ENCODE measurements at regions of chr1 and their contacts with region 1.

Region 1: GRCh38 chr1:228180271-228180958 is 14.8 kb downstream of the IBA57 start:
- DNase-seq: no peak

Region 2: DNA sequence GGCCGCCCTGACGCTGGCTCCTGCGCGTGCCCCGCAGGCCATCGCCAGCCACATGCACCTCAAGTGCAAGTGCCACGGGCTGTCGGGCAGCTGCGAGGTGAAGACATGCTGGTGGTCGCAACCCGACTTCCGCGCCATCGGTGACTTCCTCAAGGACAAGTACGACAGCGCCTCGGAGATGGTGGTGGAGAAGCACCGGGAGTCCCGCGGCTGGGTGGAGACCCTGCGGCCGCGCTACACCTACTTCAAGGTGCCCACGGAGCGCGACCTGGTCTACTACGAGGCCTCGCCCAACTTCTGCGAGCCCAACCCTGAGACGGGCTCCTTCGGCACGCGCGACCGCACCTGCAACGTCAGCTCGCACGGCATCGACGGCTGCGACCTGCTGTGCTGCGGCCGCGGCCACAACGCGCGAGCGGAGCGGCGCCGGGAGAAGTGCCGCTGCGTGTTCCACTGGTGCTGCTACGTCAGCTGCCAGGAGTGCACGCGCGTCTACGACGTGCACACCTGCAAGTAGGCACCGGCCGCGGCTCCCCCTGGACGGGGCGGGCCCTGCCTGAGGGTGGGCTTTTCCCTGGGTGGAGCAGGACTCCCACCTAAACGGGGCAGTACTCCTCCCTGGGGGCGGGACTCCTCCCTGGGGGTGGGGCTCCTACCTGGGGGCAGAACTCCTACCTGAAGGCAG is 121.3 kb before region 1 on chr1:
- in situ Hi-C with region 1: no loop called
- DNase-seq: no peak

Region 3: DNA sequence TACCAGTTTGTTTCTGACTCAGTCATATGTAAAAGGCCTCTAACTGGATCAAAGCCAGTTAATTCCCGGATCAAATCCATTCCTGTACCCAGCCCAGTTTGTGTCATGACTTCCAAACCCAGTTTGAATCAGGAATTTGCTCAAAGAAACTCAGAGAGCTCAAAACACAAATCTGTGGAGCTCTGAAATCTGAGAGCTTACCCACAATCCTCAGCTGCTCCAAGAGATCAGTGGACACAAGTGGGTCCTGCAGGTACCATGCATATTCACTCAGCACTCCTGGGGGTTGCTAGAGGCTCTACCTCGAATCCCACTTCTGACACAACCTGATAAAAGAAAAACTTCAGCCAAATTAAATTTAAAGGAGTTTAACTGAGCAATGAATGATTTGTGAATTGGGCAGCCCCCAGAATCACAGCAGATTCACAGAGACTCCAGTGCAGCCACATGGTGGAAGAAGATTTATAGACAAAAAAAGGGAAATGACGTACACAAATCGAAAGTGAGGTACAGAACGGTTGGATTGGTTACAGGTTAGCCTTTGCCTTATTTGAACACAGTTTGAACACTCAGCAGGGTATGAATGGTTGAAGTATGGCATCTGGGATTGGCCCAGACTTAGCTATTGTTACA is 59.4 kb before region 1 on chr1:
- in situ Hi-C with region 1: loop called (anchors 10 kb)
- DNase-seq: no peak